HCT116 (cell line): ENCODE measurements at regions of chr12 and their contacts with region 1.

Region 1: DNA sequence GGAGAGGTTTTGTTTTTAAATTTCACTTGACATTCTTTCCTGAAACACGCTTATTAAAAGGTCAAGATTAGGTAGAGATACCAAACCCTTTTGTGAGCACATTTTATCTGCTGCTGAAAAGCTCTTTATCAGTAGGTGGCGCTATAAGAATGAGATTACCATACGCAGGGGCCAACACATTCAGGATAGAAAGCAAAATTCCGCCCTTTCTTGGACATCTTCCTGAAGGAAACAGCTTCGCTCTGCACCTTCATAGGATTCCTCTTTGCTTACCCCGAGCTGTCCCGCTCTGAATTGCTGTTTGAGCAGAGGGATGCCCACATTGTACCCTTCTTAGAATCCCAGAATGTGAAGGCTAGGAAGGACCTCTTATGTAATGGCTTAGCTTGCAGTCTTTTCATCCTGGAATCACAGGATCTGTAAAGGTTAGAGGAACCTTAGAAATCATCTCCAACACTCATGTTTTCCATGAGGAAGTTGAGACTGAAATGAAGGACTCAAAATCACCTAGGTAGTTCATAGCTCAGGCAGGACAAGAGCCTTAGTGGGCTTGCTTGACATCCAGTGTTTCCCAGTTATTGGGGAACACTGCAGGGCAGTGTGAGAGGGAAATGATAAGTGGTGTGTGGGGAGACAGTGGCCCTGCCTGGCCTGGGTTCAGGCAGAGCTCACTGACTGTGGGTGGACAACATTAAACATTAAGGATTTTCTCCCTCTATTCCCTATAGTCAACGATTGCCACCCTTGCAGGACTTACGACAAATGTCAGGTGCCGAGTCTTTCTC is 38.7 kb upstream of the CRY1 start:
- DNase-seq: peak; percentile 44
- ATAC-seq: peak; percentile 78
- H3K4me3 ChIP-seq: no peak overlapping the region
- H3K27ac ChIP-seq: no peak overlapping the region
- H3K4me1 ChIP-seq: peaks cover 0 to 9% of the 10 kb centered on the region in 2 experiments; a peak in 2 of 4 replicates
- H3K27me3 ChIP-seq: no peaks in the 10 kb centered on the region
- CTCF ChIP-seq: peak; percentile 82 to 96 (median 92)
- POLR2A ChIP-seq: no peak
- RAD21 ChIP-seq: peak; percentile 97

Region 2: GRCh38 chr12:106871496-106871895 is 260.5 kb before region 1 on chr12:
- CTCF ChIA-PET with region 1: no interaction called
- POLR2A ChIA-PET with region 1: no interaction called
- RAD21 ChIA-PET with region 1: no interaction called
- intact Hi-C with region 1: no loop called
- DNase-seq: no peak
- ATAC-seq: no peak
- H3K4me3 ChIP-seq: no peak overlapping the region
- H3K27ac ChIP-seq: no peak overlapping the region
- H3K4me1 ChIP-seq: peaks cover 0 to 3% of the 10 kb centered on the region in 2 experiments; a peak in 1 of 4 replicates
- H3K27me3 ChIP-seq: no peaks in the 10 kb centered on the region
- CTCF ChIP-seq: no peak
- POLR2A ChIP-seq: no peak
- RAD21 ChIP-seq: no peak

Region 3: GRCh38 chr12:106974511-106974910 is 157.5 kb before region 1 on chr12:
- CTCF ChIA-PET with region 1: no interaction called
- POLR2A ChIA-PET with region 1: no interaction called
- RAD21 ChIA-PET with region 1: no interaction called
- intact Hi-C with region 1: no loop called
- DNase-seq: no peak
- ATAC-seq: no peak
- H3K4me3 ChIP-seq: no peak overlapping the region
- H3K27ac ChIP-seq: no peak overlapping the region
- H3K4me1 ChIP-seq: peaks cover 3 to 5% of the 10 kb centered on the region in 2 experiments; a peak in 2 of 4 replicates
- H3K27me3 ChIP-seq: no peaks in the 10 kb centered on the region
- CTCF ChIP-seq: no peak
- POLR2A ChIP-seq: no peak
- RAD21 ChIP-seq: no peak

Region 4: GRCh38 chr12:107402041-107403022 is 270.3 kb after region 1 on chr12:
- CTCF ChIA-PET with region 1: interaction called, 58 read pairs
- POLR2A ChIA-PET with region 1: no interaction called
- RAD21 ChIA-PET with region 1: interaction called, 6 to 8 read pairs
- intact Hi-C with region 1: loop called (anchors 1 kb)
- DNase-seq: peak; percentile 69
- ATAC-seq: peak; percentile 76
- H3K4me3 ChIP-seq: no peak overlapping the region
- H3K27ac ChIP-seq: no peak overlapping the region
- H3K4me1 ChIP-seq: peaks cover under 1 to 15% of the 10 kb centered on the region in 2 experiments; a peak in 3 of 4 replicates
- H3K27me3 ChIP-seq: no peaks in the 10 kb centered on the region
- CTCF ChIP-seq: peak; percentile 82 to 89 (median 83)
- POLR2A ChIP-seq: no peak
- RAD21 ChIP-seq: peak; percentile 94